ENCODE measurements at regions of chr1 and their contacts with region 1.

Region 1: DNA sequence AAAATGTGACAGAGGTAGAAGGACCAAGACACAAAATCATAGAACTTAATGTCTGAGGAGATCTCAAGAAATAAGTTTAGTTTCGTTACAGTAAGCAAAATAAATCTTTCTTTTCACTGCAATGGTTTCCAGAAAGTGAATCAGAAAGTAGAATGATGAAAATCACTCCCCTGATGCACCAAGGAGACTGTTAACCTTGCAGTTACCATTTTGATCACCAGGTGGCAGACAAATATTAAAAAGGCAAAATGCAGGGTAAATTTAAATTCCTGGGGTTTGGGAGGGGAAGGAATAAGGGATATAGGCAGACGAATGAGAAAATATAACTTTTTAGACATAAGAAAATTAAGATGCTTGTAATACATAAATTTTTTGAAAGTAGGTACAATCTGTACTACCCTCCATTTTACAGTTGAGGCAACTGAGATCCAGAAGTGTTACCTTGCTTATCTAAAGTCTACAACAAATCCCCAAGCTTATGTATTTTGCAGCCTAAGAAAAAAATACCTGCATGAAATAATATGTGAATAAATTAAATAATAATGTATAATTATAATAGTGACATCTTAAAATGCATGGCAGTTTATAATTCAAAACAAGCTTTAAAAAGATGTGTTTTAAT is 253.2 kb downstream of the CRB1 start:
- DNase-seq: peak; percentile 45
- H3K4me3 ChIP-seq: no peak overlapping the region
- H3K27ac ChIP-seq: no peak overlapping the region
- H3K4me1 ChIP-seq: no peaks in the 10 kb centered on the region
- CTCF ChIP-seq: peak; percentile 91

Region 2: GRCh38 chr1:197180252-197180878 is 340.9 kb before region 1 on chr1:
- CTCF ChIA-PET with region 1: no interaction called
- POLR2A ChIA-PET with region 1: no interaction called
- intact Hi-C with region 1: loop called (anchors 10 kb)
- DNase-seq: peak; percentile 52
- H3K4me3 ChIP-seq: no peak overlapping the region
- H3K27ac ChIP-seq: no peak overlapping the region
- H3K4me1 ChIP-seq: peaks cover 25% of the 10 kb centered on the region
- CTCF ChIP-seq: peak; percentile 93

Region 3: DNA sequence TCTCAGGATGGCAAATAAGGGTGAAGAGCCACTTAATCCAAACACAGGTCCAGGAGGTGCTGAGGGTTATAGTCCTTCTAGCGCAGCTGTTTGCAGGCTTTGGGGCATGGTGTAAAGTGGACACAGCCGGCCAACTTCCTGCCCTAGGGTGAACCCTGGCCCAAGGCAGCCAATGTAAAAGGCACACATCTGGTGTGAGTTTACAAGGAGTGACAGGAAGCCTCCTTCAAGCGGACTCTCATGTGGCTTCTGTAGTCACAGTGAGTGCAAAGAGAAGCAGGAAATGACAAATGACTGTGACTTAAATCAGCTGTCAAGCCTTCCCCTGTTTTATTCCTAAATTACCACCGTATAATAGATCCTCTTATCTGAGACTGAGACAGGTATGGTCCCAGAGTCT is 40.1 kb before region 1 on chr1:
- CTCF ChIA-PET with region 1: no interaction called
- POLR2A ChIA-PET with region 1: no interaction called
- intact Hi-C with region 1: no loop called
- DNase-seq: peak; percentile 7
- H3K4me3 ChIP-seq: no peak overlapping the region
- H3K27ac ChIP-seq: no peak overlapping the region
- H3K4me1 ChIP-seq: no peaks in the 10 kb centered on the region
- CTCF ChIP-seq: no peak

Region 4: DNA sequence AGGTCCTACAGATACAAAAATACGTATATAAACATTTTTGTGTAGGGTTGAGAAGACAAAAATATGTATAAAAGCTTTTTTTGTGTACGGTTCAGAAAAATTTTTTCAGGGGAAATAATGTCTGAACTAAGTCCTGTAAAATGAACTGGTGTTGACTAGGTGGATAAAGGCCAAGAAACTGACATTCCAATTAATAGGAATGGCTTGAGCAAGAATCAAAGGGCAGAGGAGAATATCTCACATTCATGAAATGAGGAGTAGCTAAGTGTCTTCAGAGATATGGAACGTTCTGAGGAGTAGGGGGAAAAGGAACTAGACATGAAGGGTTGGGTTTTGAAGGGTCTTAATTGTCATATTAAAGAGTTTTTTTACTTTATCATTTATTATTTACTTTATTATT is 22.9 kb after region 1 on chr1:
- CTCF ChIA-PET with region 1: no interaction called
- POLR2A ChIA-PET with region 1: no interaction called
- intact Hi-C with region 1: no loop called
- DNase-seq: no peak
- H3K4me3 ChIP-seq: no peak overlapping the region
- H3K27ac ChIP-seq: no peak overlapping the region
- H3K4me1 ChIP-seq: no peaks in the 10 kb centered on the region
- CTCF ChIP-seq: no peak

Region 5: GRCh38 chr1:197614916-197615692 is 93.9 kb after region 1 on chr1:
- CTCF ChIA-PET with region 1: no interaction called
- POLR2A ChIA-PET with region 1: no interaction called
- intact Hi-C with region 1: loop called (anchors 5 kb)
- DNase-seq: peak; percentile 53
- H3K4me3 ChIP-seq: no peak overlapping the region
- H3K27ac ChIP-seq: no peak overlapping the region
- H3K4me1 ChIP-seq: peaks cover 10% of the 10 kb centered on the region
- CTCF ChIP-seq: peak; percentile 92

Region 6: DNA sequence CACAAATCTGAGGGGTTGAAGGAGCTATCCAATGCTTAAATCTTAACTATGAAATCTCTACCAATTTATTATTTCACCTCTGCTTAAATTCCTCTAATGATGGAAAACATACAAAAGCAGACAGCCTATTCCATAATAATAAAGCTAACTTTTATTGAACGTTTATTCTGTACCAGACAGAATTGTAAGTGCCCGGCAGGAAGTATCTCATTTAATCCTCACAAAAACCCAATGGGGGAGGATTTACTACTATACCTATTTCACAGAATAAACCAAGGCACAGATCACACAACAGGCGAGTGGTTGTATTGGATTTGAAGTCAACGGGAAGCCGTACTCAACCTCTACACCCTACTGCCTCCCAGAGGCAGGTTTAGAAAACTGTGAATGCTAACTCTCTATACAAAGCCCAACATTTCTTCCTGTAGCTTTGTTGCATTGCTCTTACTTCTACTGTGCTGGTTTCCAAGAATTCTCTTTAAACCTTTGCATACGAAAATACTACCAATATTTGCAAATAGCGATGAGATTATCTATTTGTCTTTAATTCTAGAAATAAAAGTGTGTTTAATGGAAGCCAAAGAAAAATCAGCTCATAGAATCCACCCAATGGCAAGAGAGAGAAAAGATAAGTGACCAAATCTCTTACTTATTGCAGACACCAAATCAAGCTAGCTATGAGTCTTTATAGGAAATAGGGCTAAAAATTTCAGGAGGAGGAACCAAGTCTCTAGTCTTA is 347.7 kb after region 1 on chr1:
- CTCF ChIA-PET with region 1: no interaction called
- POLR2A ChIA-PET with region 1: no interaction called
- intact Hi-C with region 1: loop called (anchors 2 kb)
- DNase-seq: peak; percentile 74
- H3K4me3 ChIP-seq: no peak overlapping the region
- H3K27ac ChIP-seq: no peak overlapping the region
- H3K4me1 ChIP-seq: no peaks in the 10 kb centered on the region
- CTCF ChIP-seq: peak; percentile 95

Measured in OCI-LY7 (cell line).